ENCODE measurements at regions of chr2 and their contacts with region 1.

Region 1: GRCh38 chr2:42009657-42010580 is 37.9 kb upstream of the PKDCC start:
- DNase-seq: no peak
- H3K4me3 ChIP-seq: no peak overlapping the region
- H3K27ac ChIP-seq: peak overlapping the region; percentile 33 to 70
- H3K4me1 ChIP-seq: no peaks in the 10 kb centered on the region
- H3K27me3 ChIP-seq: no peaks in the 10 kb centered on the region
- CTCF ChIP-seq: no peak
- POLR2A ChIP-seq: no peak

Region 2: DNA sequence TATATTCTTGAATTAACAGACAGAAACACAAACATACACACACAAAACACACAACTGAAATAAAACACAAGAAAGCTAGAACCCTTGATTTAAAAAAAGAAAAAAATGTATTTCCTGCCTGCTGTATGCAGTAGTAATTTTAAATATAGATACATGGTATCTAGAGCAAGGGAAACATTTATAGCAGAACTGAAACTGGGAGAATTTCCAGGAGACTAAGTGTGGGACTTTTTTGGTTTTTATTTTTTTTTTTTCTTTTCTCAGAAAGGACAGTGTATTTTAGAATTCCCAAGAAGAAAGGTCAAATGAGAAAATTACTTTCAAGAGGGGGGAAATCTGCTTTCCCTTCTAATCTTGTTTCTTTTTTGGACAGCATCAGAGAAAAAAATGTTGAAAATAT is 521.0 kb before region 1 on chr2:
- intact Hi-C with region 1: no loop called
- DNase-seq: no peak
- H3K4me3 ChIP-seq: no peak overlapping the region
- H3K27ac ChIP-seq: no peak overlapping the region
- H3K4me1 ChIP-seq: no peaks in the 10 kb centered on the region
- H3K27me3 ChIP-seq: no peaks in the 10 kb centered on the region
- CTCF ChIP-seq: no peak
- POLR2A ChIP-seq: no peak

Region 3: GRCh38 chr2:41847744-41848441 is 162.0 kb before region 1 on chr2:
- intact Hi-C with region 1: no loop called
- DNase-seq: peak in 1 of 2 donors; percentile 32
- H3K4me3 ChIP-seq: no peak overlapping the region
- H3K27ac ChIP-seq: no peak overlapping the region
- H3K4me1 ChIP-seq: no peaks in the 10 kb centered on the region
- H3K27me3 ChIP-seq: no peaks in the 10 kb centered on the region
- CTCF ChIP-seq: no peak
- POLR2A ChIP-seq: no peak

Region 4: GRCh38 chr2:41933585-41934320 is 76.2 kb before region 1 on chr2:
- intact Hi-C with region 1: loop called (anchors 10 kb)
- DNase-seq: peak; percentile 55 to 69
- H3K4me3 ChIP-seq: no peak overlapping the region
- H3K27ac ChIP-seq: peak overlapping the region; percentile 83 to 85
- H3K4me1 ChIP-seq: peaks cover 9 to 10% of the 10 kb centered on the region in 2 donors
- H3K27me3 ChIP-seq: no peaks in the 10 kb centered on the region
- CTCF ChIP-seq: no peak
- POLR2A ChIP-seq: no peak

Measured in uterus (tissue), 4 donors.